Ovary (tissue), 10 donors: ENCODE measurements at regions of chr2 and their contacts with region 1.

Region 1: GRCh38 chr2:65407240-65407639 is 25.2 kb downstream of the SPRED2 start:
- DNase-seq: no peak
- H3K4me3 ChIP-seq: no peak overlapping the region
- H3K27ac ChIP-seq: no peak overlapping the region
- H3K4me1 ChIP-seq: peaks cover 7% of the 10 kb centered on the region
- H3K27me3 ChIP-seq: no peaks in the 10 kb centered on the region
- CTCF ChIP-seq: no peak
- EP300 ChIP-seq: no peak
- POLR2A ChIP-seq: no peak

Region 2: DNA sequence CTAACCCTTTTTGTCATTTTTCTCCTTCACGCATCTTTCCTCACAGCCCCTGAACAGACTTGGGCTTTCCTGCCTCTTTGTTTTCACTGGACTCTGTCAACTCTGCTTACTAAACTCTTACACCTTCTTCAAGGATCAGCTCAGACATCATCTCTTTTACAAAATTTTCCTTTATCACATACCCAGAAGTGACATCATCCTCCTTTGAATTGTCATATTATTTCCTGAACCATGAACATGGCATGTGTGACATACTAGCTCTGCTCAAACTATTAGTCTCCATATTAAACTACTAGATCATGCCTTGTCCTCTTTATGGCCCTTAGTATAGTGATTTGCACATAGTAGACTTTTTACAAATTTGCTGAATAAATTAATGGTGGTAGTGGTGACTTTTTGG is 1373.3 kb before region 1 on chr2:
- intact Hi-C with region 1: loop called in 1 of 4 experiments (anchors 5 kb)
- DNase-seq: no peak
- H3K4me3 ChIP-seq: no peak overlapping the region
- H3K27ac ChIP-seq: no peak overlapping the region
- H3K4me1 ChIP-seq: no peaks in the 10 kb centered on the region
- H3K27me3 ChIP-seq: no peaks in the 10 kb centered on the region
- CTCF ChIP-seq: no peak
- EP300 ChIP-seq: no peak
- POLR2A ChIP-seq: no peak

Region 3: GRCh38 chr2:64763126-64763525 is 644.1 kb before region 1 on chr2:
- intact Hi-C with region 1: no loop called
- DNase-seq: no peak
- H3K4me3 ChIP-seq: no peak overlapping the region
- H3K27ac ChIP-seq: no peak overlapping the region
- H3K4me1 ChIP-seq: no peaks in the 10 kb centered on the region
- H3K27me3 ChIP-seq: no peaks in the 10 kb centered on the region
- CTCF ChIP-seq: no peak
- EP300 ChIP-seq: no peak
- POLR2A ChIP-seq: no peak